Activated CD4-positive, alpha-beta memory T cell treated with anti-CD3 and anti-CD28 coated beads, Interleukin-2, amount 10 ng/mL, durations not matched to agents 7 days and 5 days (primary cell): ENCODE measurements at regions of chr20 and their contacts with region 1.

Region 1: GRCh38 chr20:44115762-44116644 is 71.0 kb downstream of the JPH2 start:
- DNase-seq: no peak
- H3K4me3 Mint-ChIP-seq: no peak overlapping the region
- H3K27ac Mint-ChIP-seq: no peak overlapping the region
- H3K4me1 Mint-ChIP-seq: peaks cover 1% of the 10 kb centered on the region
- H3K27me3 Mint-ChIP-seq: peaks cover 26% of the 10 kb centered on the region

Region 2: DNA sequence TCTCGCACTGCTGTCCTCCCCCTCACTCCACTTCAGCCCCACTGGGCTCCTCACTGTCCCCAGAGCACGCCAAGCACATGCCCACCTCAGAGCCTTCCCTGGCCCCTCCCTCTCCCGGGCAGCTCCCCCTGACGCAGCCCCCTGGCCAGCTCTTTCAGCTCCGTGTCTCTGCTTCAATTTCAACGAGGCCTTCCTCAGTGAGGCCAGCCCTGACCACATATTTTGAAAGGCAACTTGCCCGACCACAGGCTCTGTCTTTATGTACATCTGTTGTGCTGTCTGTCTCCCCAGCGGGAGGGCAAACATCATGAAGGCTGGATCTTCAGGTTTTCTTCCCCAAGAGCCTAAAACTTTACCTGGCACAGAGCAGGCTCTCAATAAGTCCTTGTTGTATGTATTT is 26.4 kb after region 1 on chr20:
- CTCF ChIA-PET with region 1: no interaction called
- POLR2A ChIA-PET with region 1: no interaction called
- DNase-seq: no peak
- H3K4me3 Mint-ChIP-seq: no peak overlapping the region
- H3K27ac Mint-ChIP-seq: no peak overlapping the region
- H3K4me1 Mint-ChIP-seq: no peaks in the 10 kb centered on the region
- H3K27me3 Mint-ChIP-seq: peaks cover 17% of the 10 kb centered on the region

Region 3: GRCh38 chr20:44187051-44187762 is 71.2 kb after region 1 on chr20 and contains the start of gene JPH2:
- CTCF ChIA-PET with region 1: interaction called, 87 read pairs
- POLR2A ChIA-PET with region 1: interaction called, 3 read pairs
- DNase-seq: no peak
- H3K4me3 Mint-ChIP-seq: no peak within 1 kb of the TSS
- H3K27ac Mint-ChIP-seq: no peak within 1 kb of the TSS
- H3K4me1 Mint-ChIP-seq: peaks cover 2% of the 10 kb centered on the region
- H3K27me3 Mint-ChIP-seq: peaks cover 59% of the 10 kb centered on the region
- total RNA-seq, gene JPH2: 0.05 to 0.10 TPM

Region 4: DNA sequence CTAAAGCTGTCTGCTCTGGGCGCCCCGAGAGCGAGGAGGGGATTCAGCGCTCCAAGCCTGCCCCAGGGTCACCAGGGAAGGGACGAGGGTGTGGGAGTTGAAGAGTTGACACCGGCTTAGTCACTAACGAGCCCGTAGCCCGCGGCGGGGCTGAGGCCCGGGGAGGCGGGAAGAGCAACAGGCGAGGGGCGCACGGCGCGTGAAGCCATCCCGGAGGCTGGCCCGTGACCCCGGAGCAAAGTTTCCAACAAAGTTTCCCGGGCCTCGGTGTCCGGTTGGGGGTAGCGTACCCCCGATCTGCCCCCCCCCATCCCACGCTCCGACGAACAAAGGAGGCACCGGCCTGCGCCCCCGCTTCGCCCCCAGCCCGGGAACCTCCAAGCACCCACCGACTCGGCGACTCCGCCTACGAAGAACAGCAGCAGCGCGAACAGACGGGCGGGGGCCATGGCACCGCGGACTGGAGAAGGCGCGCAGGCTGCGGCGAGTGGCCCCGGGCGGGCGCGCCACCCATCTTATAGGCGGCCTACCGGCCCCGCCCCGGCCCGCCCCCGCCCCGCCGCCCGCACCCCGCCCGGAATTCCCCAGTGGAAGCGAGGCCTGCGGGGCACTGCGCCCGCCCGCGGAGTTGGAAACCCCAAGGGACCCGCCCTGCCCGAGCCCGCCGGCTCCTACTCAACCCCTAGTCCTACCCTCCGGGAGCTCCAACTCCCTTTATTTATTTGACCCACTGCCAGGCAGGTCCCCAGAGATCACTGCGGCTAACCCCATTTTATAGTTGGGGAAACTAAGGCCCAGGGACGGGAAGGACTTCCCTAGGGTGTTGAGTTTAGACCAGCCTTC is 1232.2 kb after region 1 on chr20 and contains the start of gene SDC4:
- CTCF ChIA-PET with region 1: no interaction called
- POLR2A ChIA-PET with region 1: no interaction called
- DNase-seq: peak; percentile 70
- H3K4me3 Mint-ChIP-seq: peak within 1 kb of the TSS; percentile 86
- H3K27ac Mint-ChIP-seq: peak within 1 kb of the TSS; percentile 67
- H3K4me1 Mint-ChIP-seq: peaks cover 48% of the 10 kb centered on the region
- H3K27me3 Mint-ChIP-seq: no peaks in the 10 kb centered on the region
- total RNA-seq, gene SDC4: 28.1 to 28.3 TPM